ENCODE measurements at regions of chr18 and their contacts with region 1.

Region 1: DNA sequence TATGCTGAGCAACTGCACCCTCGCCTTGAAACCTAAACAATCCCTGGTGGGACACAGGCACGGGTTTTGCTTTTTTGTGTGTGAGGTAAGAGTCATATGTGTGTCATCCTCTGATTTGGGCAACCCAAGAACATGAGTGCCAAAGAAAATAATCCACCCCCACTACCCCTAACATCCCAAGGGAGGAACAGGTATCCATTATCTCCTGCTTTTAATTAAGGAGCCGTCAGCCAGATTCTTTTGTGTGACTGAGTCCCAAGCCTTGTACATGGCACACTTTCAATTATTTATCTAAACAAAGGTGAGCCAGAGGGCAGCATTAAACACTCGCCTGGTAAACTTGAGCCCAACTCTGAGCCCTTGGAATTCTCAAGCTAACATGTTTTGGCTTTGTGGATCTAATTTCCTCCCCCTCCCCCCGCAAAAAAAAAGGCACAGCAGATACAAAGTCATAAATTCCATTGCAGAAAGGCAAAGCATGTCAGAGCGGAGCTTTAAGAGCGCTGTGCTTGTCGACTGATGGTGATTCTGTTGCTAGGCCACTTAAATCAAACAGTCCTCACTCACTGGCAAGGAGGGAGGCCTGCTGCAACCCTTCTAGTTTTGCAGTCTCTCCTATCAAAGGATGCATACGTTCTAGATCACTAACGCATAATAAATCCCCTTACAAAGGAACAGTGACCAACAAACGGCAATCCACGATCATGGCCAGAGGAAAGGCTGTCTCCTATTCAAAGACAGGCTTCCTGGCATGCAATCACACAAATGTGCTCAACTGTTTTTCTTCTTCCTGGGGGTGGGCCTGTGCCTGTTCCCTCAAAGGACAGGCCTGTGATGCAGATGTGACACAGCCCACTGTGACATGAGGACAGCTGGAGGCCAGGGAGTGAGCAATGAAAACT is 143.5 kb upstream of the LMAN1 start:
- DNase-seq: peak in 1 of 2 donors; percentile 28
- ATAC-seq: no peak

Region 2: GRCh38 chr18:59623456-59624368 is 121.2 kb after region 1 on chr18:
- intact Hi-C with region 1: loop called in 1 of 2 experiments (anchors 10 kb)
- DNase-seq: no peak
- ATAC-seq: no peak

Measured in left colon (tissue), 2 donors.